ENCODE measurements at regions of chr7 and their contacts with region 1.

Region 1: GRCh38 chr7:1159891-1160668 is at the start of gene ZFAND2A:
- DNase-seq: peak; percentile 96 to 99 (median 98)
- H3K4me3 ChIP-seq: peak within 1 kb of the TSS; percentile 69 to 100 (median 93)
- H3K27ac ChIP-seq: peak within 1 kb of the TSS; percentile 86 to 100 (median 99)
- H3K27me3 ChIP-seq: no peaks in the 10 kb centered on the region
- CTCF ChIP-seq: peak in 20 of 56 donors; percentile 6 to 54 (median 23)
- total RNA-seq, gene ZFAND2A: 29.9 to 140 (median 46.0) TPM

Region 2: GRCh38 chr7:985915-986741 is 174.0 kb before region 1 on chr7:
- intact Hi-C with region 1: loop called in 1 of 2 experiments (anchors 10 kb)
- DNase-seq: no peak
- H3K4me3 ChIP-seq: no peak overlapping the region
- H3K27ac ChIP-seq: no peak overlapping the region
- H3K27me3 ChIP-seq: peaks cover 0 to 43% (median 7%) of the 10 kb centered on the region in 45 donors
- CTCF ChIP-seq: no peak

Region 3: DNA sequence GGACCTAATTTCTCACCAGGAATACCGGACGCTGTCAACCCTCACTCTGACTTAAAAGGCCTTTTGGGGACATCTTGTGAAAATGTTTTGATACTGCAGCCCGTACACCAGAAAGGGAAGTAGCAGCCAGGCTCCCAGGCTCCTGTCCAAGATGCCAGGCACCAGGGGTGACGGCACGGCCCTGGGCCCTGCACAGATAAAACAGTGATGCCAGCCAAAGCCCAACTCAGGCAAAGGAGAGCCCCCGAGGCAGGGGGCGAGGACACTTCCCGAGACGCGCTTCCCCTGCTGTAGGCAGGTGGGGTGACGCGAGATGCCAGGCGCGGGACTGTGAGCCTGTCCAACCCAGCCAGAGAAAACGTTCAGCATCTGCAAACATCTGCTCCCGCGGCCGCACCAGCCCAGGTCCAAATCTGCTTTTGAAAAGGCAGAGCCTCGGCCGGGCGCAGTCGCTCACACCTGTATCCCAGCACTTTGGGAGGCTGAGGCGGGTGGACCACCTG is 15.8 kb before region 1 on chr7:
- intact Hi-C with region 1: loop called in 1 of 2 experiments (anchors 2 kb)
- DNase-seq: peak in 5 of 10 donors; percentile 40 to 70 (median 48)
- H3K4me3 ChIP-seq: peak overlapping the region in 3 of 59 donors; percentile 1 to 18 (median 12)
- H3K27ac ChIP-seq: peak overlapping the region in 6 of 59 donors; percentile 13 to 59 (median 34)
- H3K27me3 ChIP-seq: no peaks in the 10 kb centered on the region
- CTCF ChIP-seq: peak in 47 of 56 donors; percentile 11 to 66 (median 39)